Activated CD8-positive, alpha-beta T cell treated with anti-CD3 and anti-CD28 coated beads, Interleukin-2, amount 10 ng/mL, durations not matched to agents 7 days and 5 days (primary cell): ENCODE measurements at regions of chr11 and their contacts with region 1.

Region 1: GRCh38 chr11:67317205-67317887 is 14.0 kb downstream of the SSH3 start:
- DNase-seq: peak; percentile 99
- ATAC-seq: peak; percentile 91
- H3K4me3 Mint-ChIP-seq: peak overlapping the region; percentile 91
- H3K27ac Mint-ChIP-seq: peak overlapping the region; percentile 99
- H3K4me1 Mint-ChIP-seq: peaks cover 27% of the 10 kb centered on the region
- H3K27me3 Mint-ChIP-seq: peaks cover 2% of the 10 kb centered on the region

Region 2: DNA sequence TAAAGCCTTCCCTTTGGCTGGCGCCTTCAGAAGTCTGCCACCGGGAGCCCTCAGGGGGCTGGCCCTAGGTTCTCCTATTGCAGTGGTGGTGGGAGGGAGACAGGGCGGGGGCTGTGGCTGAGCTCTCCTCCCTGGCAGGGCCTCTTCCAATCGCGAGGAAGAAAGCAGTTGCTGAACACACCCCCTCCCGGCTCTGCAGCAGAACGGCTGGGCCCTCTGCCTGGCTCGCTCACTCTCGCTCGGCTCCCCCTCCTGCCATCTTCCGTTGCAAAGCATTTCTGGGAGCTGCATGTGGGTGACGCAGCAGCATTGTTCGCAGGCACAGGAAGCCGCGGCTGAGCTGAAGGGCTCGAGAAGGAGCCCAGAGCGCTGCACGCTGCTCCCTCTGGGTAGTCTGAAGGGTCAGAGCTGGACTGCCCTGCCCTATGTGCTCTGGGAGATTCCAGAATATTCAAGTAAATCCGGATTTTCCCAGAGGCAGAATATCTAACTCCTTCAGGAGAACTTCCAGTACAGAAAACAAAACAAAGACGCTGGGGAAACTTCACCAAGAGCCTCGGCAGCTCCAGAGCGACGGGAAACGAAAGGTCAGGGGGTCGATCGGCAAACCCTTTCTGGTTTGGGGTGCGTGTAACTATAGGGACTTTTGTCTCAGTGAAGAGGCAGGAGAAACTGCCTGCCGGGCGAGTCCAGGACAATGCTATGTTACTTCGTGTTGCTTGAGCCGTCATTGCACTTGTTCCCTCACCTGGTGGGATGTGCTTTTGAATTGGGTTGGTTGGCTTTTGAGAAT is 77.4 kb before region 1 on chr11:
- CTCF ChIA-PET with region 1: interaction called, 16 read pairs
- POLR2A ChIA-PET with region 1: interaction called, 12 read pairs
- DNase-seq: peak; percentile 98
- ATAC-seq: peak; percentile 94
- H3K4me3 Mint-ChIP-seq: peak overlapping the region; percentile 100
- H3K27ac Mint-ChIP-seq: peak overlapping the region; percentile 98
- H3K4me1 Mint-ChIP-seq: peaks cover 45% of the 10 kb centered on the region
- H3K27me3 Mint-ChIP-seq: no peaks in the 10 kb centered on the region

Region 3: DNA sequence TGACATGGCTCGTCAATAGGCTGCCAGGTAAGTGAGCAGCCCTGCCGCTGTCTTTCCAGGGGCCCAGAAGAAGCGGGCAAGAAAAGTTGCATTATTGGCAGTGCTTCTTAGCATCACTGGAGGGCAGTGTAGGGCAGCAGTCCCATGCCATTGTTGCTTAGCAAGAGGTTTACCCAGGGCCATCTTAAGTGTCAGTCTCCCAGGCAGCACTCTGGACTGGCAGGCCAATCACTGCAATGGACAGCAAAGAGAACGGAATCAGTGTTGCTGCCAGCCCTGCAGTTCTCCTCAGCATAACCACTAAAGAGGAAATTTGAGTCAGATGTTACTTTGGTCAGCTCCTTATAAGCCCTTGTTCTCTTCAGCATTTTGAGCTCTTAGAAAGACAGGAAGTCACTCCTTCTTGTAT is 64.5 kb before region 1 on chr11:
- CTCF ChIA-PET with region 1: interaction called, 19 read pairs
- POLR2A ChIA-PET with region 1: no interaction called
- DNase-seq: peak; percentile 65
- ATAC-seq: peak; percentile 80
- H3K4me3 Mint-ChIP-seq: no peak overlapping the region
- H3K27ac Mint-ChIP-seq: peak overlapping the region; percentile 48
- H3K4me1 Mint-ChIP-seq: peaks cover 46% of the 10 kb centered on the region
- H3K27me3 Mint-ChIP-seq: no peaks in the 10 kb centered on the region

Region 4: DNA sequence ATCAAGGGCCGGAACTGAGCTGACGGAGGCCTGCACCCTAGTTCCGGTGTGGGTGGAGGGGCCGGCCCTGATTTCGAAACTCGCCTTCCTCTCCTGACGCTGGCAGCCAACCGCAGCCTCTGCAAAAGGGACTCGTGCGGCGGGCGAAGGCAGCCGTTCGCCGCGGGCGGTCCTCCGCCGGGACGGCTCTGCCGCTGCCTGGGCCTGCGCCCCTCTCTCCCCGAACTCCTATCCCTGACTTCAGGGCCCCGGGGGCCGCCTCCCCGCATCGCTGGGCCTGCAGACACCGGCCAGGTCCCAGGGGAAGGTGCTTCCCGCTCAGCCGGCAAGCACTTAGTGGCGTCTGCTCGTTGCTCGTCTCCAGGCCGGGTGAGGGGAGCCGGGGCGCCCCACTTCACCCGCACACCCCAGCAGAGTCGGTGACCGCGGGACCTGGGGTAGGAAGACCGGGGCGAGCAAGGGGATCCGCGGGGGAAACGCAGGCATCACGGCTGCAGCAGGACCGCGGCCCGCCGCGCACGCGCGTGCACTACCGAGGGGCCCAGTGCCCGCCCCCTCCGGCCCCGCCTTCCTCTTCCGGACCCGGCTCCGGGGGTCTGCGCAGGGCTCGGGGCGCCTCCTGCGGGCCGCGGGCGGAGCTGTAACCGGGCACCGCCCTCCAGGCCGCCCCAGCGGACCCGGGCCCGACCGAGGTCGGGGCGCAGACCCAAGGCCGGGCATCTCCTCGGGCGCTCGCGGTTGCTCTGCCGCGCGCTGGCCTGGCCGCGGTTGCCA is 28.7 kb before region 1 on chr11:
- CTCF ChIA-PET with region 1: interaction called, 25 read pairs
- POLR2A ChIA-PET with region 1: interaction called, 14 read pairs
- DNase-seq: peak; percentile 94
- ATAC-seq: peak; percentile 72
- H3K4me3 Mint-ChIP-seq: peak overlapping the region; percentile 75
- H3K27ac Mint-ChIP-seq: peak overlapping the region; percentile 97
- H3K4me1 Mint-ChIP-seq: peaks cover 79% of the 10 kb centered on the region
- H3K27me3 Mint-ChIP-seq: no peaks in the 10 kb centered on the region

Region 5: GRCh38 chr11:67303132-67303834 is 14.1 kb before region 1 on chr11 and contains the start of gene SSH3:
- CTCF ChIA-PET with region 1: interaction called, 10 read pairs
- POLR2A ChIA-PET with region 1: interaction called, 7 read pairs
- DNase-seq: peak; percentile 55
- ATAC-seq: peak; percentile 84
- H3K4me3 Mint-ChIP-seq: peak within 1 kb of the TSS; percentile 55
- H3K27ac Mint-ChIP-seq: peak within 1 kb of the TSS; percentile 43
- H3K4me1 Mint-ChIP-seq: peaks cover 19% of the 10 kb centered on the region
- H3K27me3 Mint-ChIP-seq: no peaks in the 10 kb centered on the region
- total RNA-seq, gene SSH3: 12.0 to 13.0 TPM

Region 6: DNA sequence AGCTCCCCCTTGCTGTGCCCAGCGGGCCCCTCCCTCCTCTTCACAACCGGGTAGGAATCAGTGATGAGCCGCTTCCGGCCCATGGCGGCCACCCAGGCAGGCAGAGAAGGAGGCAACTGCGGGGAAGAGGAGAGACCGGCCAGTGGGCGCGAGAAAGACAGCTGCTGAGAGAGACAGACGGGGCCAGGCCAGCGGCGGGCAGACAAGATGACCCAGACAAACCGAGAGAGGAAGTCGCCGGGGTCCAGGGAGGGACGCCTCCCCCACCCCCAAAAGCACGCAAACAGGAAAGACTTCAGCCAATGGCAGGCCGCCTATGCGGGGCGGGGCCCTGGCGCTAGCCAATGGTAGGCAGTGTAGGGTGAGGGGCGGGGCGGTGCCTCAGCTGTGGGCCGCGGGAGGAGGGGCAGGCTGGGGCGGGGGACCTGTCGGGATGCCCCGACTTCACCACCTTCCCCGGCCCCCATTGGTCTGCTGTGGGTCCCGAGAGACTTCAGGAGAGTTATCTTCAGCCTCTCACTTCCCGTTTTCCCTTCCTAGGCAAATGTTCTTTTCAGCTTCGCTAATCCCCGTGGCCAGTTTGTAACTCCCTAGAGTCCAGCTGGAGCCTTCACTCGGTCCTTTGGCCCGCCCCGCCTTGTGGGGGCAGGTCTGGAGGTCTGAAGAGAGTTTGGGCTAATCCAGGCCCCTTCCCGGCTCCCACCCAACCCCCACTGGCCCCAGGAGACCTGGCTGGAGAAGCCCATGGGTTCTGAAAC is 36.1 kb after region 1 on chr11 and contains the start of gene POLD4:
- CTCF ChIA-PET with region 1: interaction called, 62 read pairs
- POLR2A ChIA-PET with region 1: interaction called, 11 read pairs
- DNase-seq: peak; percentile 96
- ATAC-seq: peak; percentile 92
- H3K4me3 Mint-ChIP-seq: peak within 1 kb of the TSS; percentile 93
- H3K27ac Mint-ChIP-seq: peak within 1 kb of the TSS; percentile 99
- H3K4me1 Mint-ChIP-seq: peaks cover 42% of the 10 kb centered on the region
- H3K27me3 Mint-ChIP-seq: peaks cover 12% of the 10 kb centered on the region
- total RNA-seq, gene POLD4: 53.2 to 56.7 TPM

Region 7: GRCh38 chr11:67382276-67383136 is 65.2 kb after region 1 on chr11:
- CTCF ChIA-PET with region 1: interaction called, 53 read pairs
- POLR2A ChIA-PET with region 1: no interaction called
- DNase-seq: peak; percentile 90
- ATAC-seq: peak; percentile 97
- H3K4me3 Mint-ChIP-seq: no peak overlapping the region
- H3K27ac Mint-ChIP-seq: no peak overlapping the region
- H3K4me1 Mint-ChIP-seq: peaks cover 7% of the 10 kb centered on the region
- H3K27me3 Mint-ChIP-seq: peaks cover 19% of the 10 kb centered on the region